IMR-90 (cell line): ENCODE measurements at regions of chr22 and their contacts with region 1.

Region 1: DNA sequence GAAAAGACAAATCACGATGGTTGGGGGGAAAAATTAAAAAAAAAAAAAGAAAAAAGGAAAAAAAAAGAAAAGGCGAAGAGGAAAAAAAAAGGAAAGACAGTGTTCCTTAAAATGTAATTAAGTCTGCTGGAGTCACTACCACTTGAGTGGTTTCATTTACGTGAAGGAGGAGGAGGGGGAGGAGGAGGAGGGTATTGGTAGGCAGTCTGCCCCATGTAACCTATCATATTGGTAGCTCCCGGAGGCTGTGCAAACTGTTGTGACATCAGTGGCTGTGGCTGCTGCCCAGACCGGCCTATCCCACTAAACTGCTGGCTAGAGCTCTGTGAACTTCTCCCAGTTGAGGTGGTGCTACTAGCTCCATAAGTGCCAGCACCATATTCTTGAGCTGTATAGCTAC is 17.9 kb downstream of the KDELR3 start:
- DNase-seq: no peak
- ATAC-seq: no peak; the same call in 1 of the 2 replicates
- H3K4me3 ChIP-seq: no peak overlapping the region
- H3K27ac ChIP-seq: no peak overlapping the region
- H3K4me1 ChIP-seq: peaks cover 22% of the 10 kb centered on the region
- H3K27me3 ChIP-seq: no peaks in the 10 kb centered on the region
- CTCF ChIP-seq: no peak
- POLR2A ChIP-seq: no peak
- RAD21 ChIP-seq: no peak

Region 2: GRCh38 chr22:38504731-38505540 is 19.2 kb after region 1 on chr22:
- CTCF ChIA-PET with region 1: interaction called, 5 read pairs
- POLR2A ChIA-PET with region 1: interaction called, 21 read pairs
- dilution Hi-C with region 1: no loop called
- in situ Hi-C with region 1: no loop called
- intact Hi-C with region 1: no loop called
- DNase-seq: peak; percentile 48
- ATAC-seq: no peak
- H3K4me3 ChIP-seq: peak overlapping the region; percentile 70
- H3K27ac ChIP-seq: peak overlapping the region; percentile 94
- H3K4me1 ChIP-seq: peaks cover 7% of the 10 kb centered on the region
- H3K27me3 ChIP-seq: no peaks in the 10 kb centered on the region
- CTCF ChIP-seq: no peak
- POLR2A ChIP-seq: no peak
- RAD21 ChIP-seq: no peak

Region 3: DNA sequence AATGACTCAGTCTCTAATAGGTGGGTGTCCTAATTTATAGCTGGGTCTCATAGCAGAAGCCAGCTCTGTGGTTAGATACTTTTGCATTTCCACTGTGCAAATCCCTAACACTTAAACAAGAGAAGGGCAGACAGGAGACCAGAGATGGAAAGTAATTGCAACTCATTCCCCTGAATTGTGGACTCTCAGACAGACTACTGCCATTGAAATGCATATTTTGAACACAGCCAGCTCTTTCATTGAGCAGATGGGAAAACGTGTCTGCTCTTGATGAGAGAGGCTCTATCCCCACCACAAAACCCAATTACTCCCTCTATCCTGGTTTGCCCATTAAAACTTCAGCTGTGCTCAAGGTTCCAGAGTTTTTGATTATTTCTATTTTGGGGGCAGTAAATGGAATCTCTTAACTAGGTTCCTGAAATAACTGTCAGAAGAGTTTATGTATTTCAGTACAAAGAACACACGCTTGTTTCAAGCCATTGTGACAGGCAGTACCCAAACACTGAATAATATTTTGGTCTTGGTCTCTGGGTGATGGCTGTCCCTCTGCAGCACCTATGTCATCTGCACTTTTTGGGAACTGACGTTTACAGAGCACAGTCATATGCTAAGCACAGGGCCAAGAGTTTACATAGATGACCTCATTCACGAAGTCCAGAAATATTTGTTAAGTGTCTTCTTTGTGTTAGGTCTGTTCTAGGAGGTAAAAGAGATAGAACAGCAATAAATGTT is 128.7 kb after region 1 on chr22:
- CTCF ChIA-PET with region 1: no interaction called
- POLR2A ChIA-PET with region 1: no interaction called
- dilution Hi-C with region 1: no loop called
- in situ Hi-C with region 1: no loop called
- intact Hi-C with region 1: no loop called
- DNase-seq: peak; percentile 59
- ATAC-seq: peak; percentile 72
- H3K4me3 ChIP-seq: no peak overlapping the region
- H3K27ac ChIP-seq: no peak overlapping the region
- H3K4me1 ChIP-seq: peaks cover 2% of the 10 kb centered on the region; the same call in 1 of the 2 replicates
- H3K27me3 ChIP-seq: no peaks in the 10 kb centered on the region
- CTCF ChIP-seq: no peak
- POLR2A ChIP-seq: no peak
- RAD21 ChIP-seq: no peak